GM12878 (cell line): ENCODE measurements at regions of chr7 and their contacts with region 1.

Region 1: GRCh38 chr7:114530074-114530611 is 115.5 kb downstream of the FOXP2 start:
- DNase-seq: no peak
- ATAC-seq: no peak; the same call in 2 of the 3 replicates
- H3K4me3 ChIP-seq: no peak overlapping the region
- H3K27ac ChIP-seq: no peak overlapping the region
- H3K4me1 ChIP-seq: no peaks in the 10 kb centered on the region
- H3K27me3 ChIP-seq: no peaks in the 10 kb centered on the region
- CTCF ChIP-seq: no peak
- EP300 ChIP-seq: no peak
- POLR2A ChIP-seq: no peak
- RAD21 ChIP-seq: no peak

Region 2: DNA sequence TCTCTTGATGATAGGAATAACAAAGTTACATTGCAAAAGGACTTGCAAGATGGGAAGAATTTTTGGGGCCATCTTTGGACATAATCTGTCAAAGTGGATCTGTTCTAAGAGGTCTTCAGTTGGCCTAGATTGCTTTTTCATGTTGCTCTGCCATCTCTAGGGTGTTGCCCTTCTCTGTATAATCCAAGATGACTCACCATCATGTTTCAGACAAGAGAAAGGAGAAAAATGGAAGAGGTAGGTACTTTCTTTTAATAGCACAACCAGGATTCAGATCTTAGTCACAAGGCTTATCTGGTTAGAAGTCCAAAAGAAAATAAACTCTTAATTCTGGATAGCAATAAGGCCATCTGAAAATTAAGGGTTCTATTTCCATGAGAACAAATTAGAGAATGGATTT is 154.2 kb before region 1 on chr7:
- CTCF ChIA-PET with region 1: no interaction called
- POLR2A ChIA-PET with region 1: no interaction called
- RAD21 ChIA-PET with region 1: no interaction called
- SMC1A ChIA-PET with region 1: no interaction called
- in situ Hi-C with region 1: no loop called
- intact Hi-C with region 1: no loop called
- DNase-seq: no peak
- ATAC-seq: no peak
- H3K4me3 ChIP-seq: no peak overlapping the region
- H3K27ac ChIP-seq: no peak overlapping the region
- H3K4me1 ChIP-seq: no peaks in the 10 kb centered on the region
- H3K27me3 ChIP-seq: no peaks in the 10 kb centered on the region
- CTCF ChIP-seq: no peak
- EP300 ChIP-seq: no peak
- POLR2A ChIP-seq: no peak
- RAD21 ChIP-seq: no peak

Region 3: GRCh38 chr7:114432703-114433102 is 97.4 kb before region 1 on chr7:
- CTCF ChIA-PET with region 1: no interaction called
- POLR2A ChIA-PET with region 1: no interaction called
- RAD21 ChIA-PET with region 1: no interaction called
- SMC1A ChIA-PET with region 1: no interaction called
- in situ Hi-C with region 1: no loop called
- intact Hi-C with region 1: loop called (anchors 5 kb)
- DNase-seq: no peak
- ATAC-seq: peak; percentile 80
- H3K4me3 ChIP-seq: no peak overlapping the region
- H3K27ac ChIP-seq: no peak overlapping the region
- H3K4me1 ChIP-seq: no peaks in the 10 kb centered on the region
- H3K27me3 ChIP-seq: no peaks in the 10 kb centered on the region
- CTCF ChIP-seq: no peak
- EP300 ChIP-seq: no peak
- POLR2A ChIP-seq: no peak
- RAD21 ChIP-seq: no peak

Region 4: DNA sequence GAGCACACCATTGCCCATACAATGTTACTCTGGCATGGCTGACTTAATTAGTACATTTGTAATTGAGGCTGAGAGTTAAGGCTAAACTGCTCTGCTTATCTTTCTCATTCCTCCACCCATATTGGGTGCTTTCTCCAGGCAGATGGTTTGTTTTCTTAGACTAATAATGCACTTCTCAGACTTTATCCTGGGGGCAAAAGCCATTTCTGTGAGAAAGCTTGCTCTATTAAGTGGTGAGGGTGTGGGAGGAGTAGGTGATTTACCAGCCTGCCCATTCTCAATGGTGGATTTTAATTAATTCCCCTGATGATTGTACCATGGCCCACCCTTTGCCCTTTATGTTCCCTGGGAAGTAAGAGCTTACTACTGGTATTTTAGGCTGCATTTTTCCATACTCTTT is 59.3 kb after region 1 on chr7:
- CTCF ChIA-PET with region 1: no interaction called
- POLR2A ChIA-PET with region 1: no interaction called
- RAD21 ChIA-PET with region 1: no interaction called
- SMC1A ChIA-PET with region 1: no interaction called
- in situ Hi-C with region 1: no loop called
- intact Hi-C with region 1: no loop called
- DNase-seq: no peak
- ATAC-seq: peak; percentile 33
- H3K4me3 ChIP-seq: no peak overlapping the region
- H3K27ac ChIP-seq: no peak overlapping the region
- H3K4me1 ChIP-seq: no peaks in the 10 kb centered on the region
- H3K27me3 ChIP-seq: no peaks in the 10 kb centered on the region
- CTCF ChIP-seq: no peak
- EP300 ChIP-seq: no peak
- POLR2A ChIP-seq: no peak
- RAD21 ChIP-seq: no peak